ENCODE measurements at regions of chr10 and their contacts with region 1.

Region 1: DNA sequence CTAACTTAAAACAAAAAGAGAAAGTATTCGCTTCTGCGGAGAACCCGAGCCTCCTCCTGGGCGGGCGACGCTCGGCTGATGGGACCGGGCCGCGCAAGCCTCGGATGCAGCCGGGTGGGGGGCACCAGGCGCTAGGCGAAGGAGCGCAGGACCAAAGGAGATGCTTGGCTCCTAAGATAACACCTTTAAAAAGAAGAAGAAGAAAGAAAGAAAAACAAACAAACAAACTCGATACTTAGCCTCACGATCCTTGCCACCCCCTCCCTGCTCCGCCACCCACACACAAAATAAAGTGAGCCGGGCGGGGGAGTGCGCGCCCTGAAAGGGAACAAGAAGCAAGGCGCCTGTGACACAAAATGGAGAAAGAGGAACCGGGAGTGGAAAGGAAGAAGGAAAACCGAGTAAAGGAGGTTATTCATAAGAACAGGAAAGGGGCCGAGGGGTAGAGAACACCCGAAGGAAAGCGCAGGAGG is 34.0 kb upstream of the EBLN1 start:
- DNase-seq: peak; percentile 67 to 81
- H3K4me3 ChIP-seq: peak overlapping the region; percentile 66 to 89
- H3K27ac ChIP-seq: peak overlapping the region; percentile 97 to 99
- H3K4me1 ChIP-seq: no peaks in the 10 kb centered on the region
- H3K27me3 ChIP-seq: no peaks in the 10 kb centered on the region
- CTCF ChIP-seq: no peak

Region 2: DNA sequence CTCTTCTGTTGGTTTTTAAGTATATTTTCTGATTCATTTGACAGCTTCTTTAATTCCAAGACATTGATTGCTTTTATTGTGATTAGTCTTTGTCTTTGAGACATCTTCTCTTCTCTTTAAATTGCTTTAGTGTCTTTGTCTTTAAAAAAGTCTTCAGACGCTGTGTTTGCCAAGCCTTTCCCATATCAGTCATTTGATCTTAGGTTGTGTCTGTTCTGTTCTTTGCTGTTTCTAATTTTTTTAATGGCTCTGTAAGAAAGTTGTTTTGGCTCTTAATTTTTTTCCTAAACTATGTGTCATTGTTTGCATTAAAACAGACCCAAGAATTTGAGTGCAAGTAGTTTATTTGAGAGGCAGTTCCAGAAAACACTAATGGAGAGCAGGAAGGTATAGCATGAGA is 78.3 kb before region 1 on chr10:
- intact Hi-C with region 1: no loop called
- DNase-seq: no peak
- H3K4me3 ChIP-seq: no peak overlapping the region
- H3K27ac ChIP-seq: no peak overlapping the region
- H3K4me1 ChIP-seq: no peaks in the 10 kb centered on the region
- H3K27me3 ChIP-seq: peaks cover 0 to 4% of the 10 kb centered on the region in 2 donors
- CTCF ChIP-seq: no peak

Region 3: DNA sequence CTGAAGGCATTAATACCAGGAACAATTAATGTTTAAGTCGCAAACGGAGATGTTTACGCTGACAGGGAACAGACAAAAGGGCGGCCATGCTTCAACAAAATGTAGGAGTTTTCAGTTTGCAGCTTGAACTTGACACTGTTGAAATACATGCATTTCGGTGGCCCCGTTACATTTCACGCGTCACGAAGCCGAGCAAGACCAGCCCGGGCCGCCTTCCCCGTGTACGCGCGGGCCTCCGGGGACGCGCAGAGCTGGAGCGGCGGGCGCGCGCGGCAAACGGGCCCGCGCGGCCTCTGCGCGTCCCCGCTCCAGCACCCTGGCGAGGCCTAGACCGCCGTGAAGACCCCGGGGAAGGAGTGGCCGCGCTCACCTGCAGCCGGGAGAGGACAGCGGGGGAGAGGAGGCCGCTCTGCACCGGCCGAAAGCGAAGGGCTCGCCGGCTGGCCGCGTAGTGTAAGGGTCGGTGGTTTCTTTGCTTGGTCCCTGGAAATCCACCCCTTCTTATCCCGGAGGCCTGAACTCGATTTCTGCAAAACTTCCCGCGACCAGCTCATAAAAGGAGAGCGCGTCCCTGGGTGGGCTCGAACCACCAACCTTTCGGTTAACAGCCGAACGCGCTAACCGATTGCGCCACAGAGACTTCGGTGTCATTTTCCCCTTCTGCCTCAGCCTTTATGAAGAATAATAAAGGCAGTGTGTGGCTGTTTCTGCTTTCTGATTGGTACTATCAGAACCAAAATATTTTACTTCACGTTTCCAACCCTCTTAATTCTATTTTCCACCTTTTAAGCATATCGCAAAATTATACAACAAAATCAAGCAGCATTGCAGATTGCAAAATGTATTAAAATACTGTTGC is 22.6 kb before region 1 on chr10:
- intact Hi-C with region 1: loop called (anchors 2 kb)
- DNase-seq: peak; percentile 88 to 92
- H3K4me3 ChIP-seq: peak overlapping the region; percentile 60 to 69
- H3K27ac ChIP-seq: peak overlapping the region; percentile 78 to 84
- H3K4me1 ChIP-seq: peaks cover 0 to 5% (median 0%) of the 10 kb centered on the region in 4 donors
- H3K27me3 ChIP-seq: no peaks in the 10 kb centered on the region
- CTCF ChIP-seq: peak in 1 of 2 experiments; percentile 5

Region 4: GRCh38 chr10:22316285-22317120 is 64.7 kb after region 1 on chr10 and contains the start of gene COMMD3:
- intact Hi-C with region 1: loop called (anchors 5 kb)
- DNase-seq: peak; percentile 85 to 93
- H3K4me3 ChIP-seq: peak within 1 kb of the TSS; percentile 76 to 90
- H3K27ac ChIP-seq: peak within 1 kb of the TSS; percentile 93 to 96
- H3K4me1 ChIP-seq: peaks cover 0 to 31% (median 10%) of the 10 kb centered on the region in 4 donors
- H3K27me3 ChIP-seq: no peaks in the 10 kb centered on the region
- CTCF ChIP-seq: no peak